ENCODE measurements at regions of chr20 and their contacts with region 1.

Region 1: GRCh38 chr20:5448449-5449118 is 131.8 kb upstream of the PROKR2 start:
- DNase-seq: peak; percentile 81
- H3K4me3 ChIP-seq: peak overlapping the region in 1 of 2 experiments; percentile 21; a peak in 1 of 4 replicates
- H3K27ac ChIP-seq: peak overlapping the region in 1 of 2 experiments; percentile 86; a peak in 2 of 4 replicates
- H3K4me1 ChIP-seq: peaks cover 0 to 15% of the 10 kb centered on the region in 2 experiments; a peak in 2 of 4 replicates
- H3K27me3 ChIP-seq: no peaks in the 10 kb centered on the region
- CTCF ChIP-seq: peak; percentile 76
- EP300 ChIP-seq: no peak
- RAD21 ChIP-seq: peak; percentile 90

Region 2: DNA sequence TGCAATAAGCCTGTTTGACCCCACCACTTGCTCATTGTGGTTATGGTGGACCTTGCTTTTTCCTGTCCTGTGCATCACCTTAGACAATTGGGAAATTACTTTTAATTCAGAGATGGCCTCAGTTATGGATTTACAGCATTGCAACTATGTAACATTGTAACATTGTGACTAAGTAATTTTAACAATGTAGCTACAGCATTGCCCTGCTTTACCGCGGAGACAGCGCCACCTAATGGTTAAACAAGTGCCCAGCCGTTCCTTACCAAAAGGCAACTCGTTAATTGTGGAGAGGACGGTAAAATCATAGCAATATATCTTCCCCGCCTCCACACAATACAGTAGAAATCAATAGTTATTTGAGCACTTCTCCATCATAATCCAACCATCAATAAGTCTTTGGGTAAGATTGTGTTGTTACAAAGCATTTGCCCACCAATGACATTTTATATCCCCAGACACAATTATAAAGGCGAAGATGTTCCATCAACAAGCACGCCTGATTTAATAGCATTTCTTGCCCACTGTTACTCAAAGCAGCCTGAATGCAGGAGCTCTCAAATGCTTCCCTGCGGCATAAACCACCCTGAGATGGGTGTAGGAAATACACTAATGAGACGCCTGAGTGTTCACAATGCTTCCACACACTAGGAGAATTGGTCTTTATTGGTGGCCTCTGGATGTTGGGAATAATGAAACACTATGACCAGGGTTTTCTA is 225.5 kb before region 1 on chr20:
- CTCF ChIA-PET with region 1: interaction called, 19 read pairs
- POLR2A ChIA-PET with region 1: no interaction called
- DNase-seq: no peak
- H3K4me3 ChIP-seq: no peak overlapping the region; a peak in 1 of 4 replicates
- H3K27ac ChIP-seq: no peak overlapping the region
- H3K4me1 ChIP-seq: no peaks in the 10 kb centered on the region
- H3K27me3 ChIP-seq: no peaks in the 10 kb centered on the region
- CTCF ChIP-seq: peak; percentile 94
- EP300 ChIP-seq: no peak
- RAD21 ChIP-seq: peak; percentile 57

Region 3: GRCh38 chr20:5393218-5393870 is 55.2 kb before region 1 on chr20:
- CTCF ChIA-PET with region 1: interaction called, 69 read pairs
- POLR2A ChIA-PET with region 1: interaction called, 3 read pairs
- DNase-seq: peak; percentile 45
- H3K4me3 ChIP-seq: no peak overlapping the region
- H3K27ac ChIP-seq: peak overlapping the region in 1 of 2 experiments; percentile 95; a peak in 2 of 4 replicates
- H3K4me1 ChIP-seq: peaks cover 0 to 28% of the 10 kb centered on the region in 2 experiments; a peak in 2 of 4 replicates
- H3K27me3 ChIP-seq: no peaks in the 10 kb centered on the region
- CTCF ChIP-seq: no peak
- EP300 ChIP-seq: peak in 1 of 2 experiments; percentile 95; a peak in 2 of 4 replicates
- RAD21 ChIP-seq: peak; percentile 82

Region 4: DNA sequence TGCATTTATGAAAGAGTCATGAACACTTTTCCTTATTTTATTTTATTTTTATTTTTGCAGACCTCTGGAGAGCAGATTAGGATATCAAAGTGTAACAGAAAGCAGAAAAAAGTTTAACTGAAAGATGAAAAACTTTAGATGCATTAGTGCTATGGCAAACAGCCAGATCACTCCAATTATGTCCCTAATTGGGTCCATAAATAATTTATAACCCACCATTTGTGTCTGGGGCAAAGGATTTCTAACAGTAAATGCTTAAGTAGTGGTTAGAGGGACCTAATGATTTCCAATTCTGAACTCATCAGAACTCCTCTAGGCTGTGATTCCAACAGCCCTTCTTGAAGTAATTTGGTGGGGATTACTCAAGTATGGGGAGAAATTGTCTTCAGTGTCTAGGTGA is 38.1 kb before region 1 on chr20:
- CTCF ChIA-PET with region 1: interaction called, 27 read pairs
- POLR2A ChIA-PET with region 1: no interaction called
- DNase-seq: peak; percentile 26
- H3K4me3 ChIP-seq: no peak overlapping the region
- H3K27ac ChIP-seq: peak overlapping the region in 1 of 2 experiments; percentile 98; a peak in 2 of 4 replicates
- H3K4me1 ChIP-seq: peaks cover 0 to 31% of the 10 kb centered on the region in 2 experiments; a peak in 2 of 4 replicates
- H3K27me3 ChIP-seq: no peaks in the 10 kb centered on the region
- CTCF ChIP-seq: no peak
- EP300 ChIP-seq: peak in 1 of 2 experiments; percentile 89; a peak in 2 of 4 replicates
- RAD21 ChIP-seq: no peak

Region 5: GRCh38 chr20:5430670-5431069 is 17.9 kb before region 1 on chr20:
- CTCF ChIA-PET with region 1: interaction called, 38 read pairs
- POLR2A ChIA-PET with region 1: no interaction called
- DNase-seq: no peak
- H3K4me3 ChIP-seq: no peak overlapping the region
- H3K27ac ChIP-seq: no peak overlapping the region
- H3K4me1 ChIP-seq: peaks cover 0 to 6% of the 10 kb centered on the region in 2 experiments; a peak in 1 of 4 replicates
- H3K27me3 ChIP-seq: no peaks in the 10 kb centered on the region
- CTCF ChIP-seq: no peak
- EP300 ChIP-seq: no peak
- RAD21 ChIP-seq: peak; percentile 22

Region 6: GRCh38 chr20:5495939-5496338 is 47.4 kb after region 1 on chr20:
- CTCF ChIA-PET with region 1: interaction called, 10 read pairs
- POLR2A ChIA-PET with region 1: no interaction called
- DNase-seq: no peak
- H3K4me3 ChIP-seq: no peak overlapping the region
- H3K27ac ChIP-seq: no peak overlapping the region
- H3K4me1 ChIP-seq: peaks cover 0 to 10% of the 10 kb centered on the region in 2 experiments; a peak in 1 of 4 replicates
- H3K27me3 ChIP-seq: no peaks in the 10 kb centered on the region
- CTCF ChIP-seq: no peak
- EP300 ChIP-seq: no peak
- RAD21 ChIP-seq: no peak

Region 7: GRCh38 chr20:5863040-5863833 is 414.7 kb after region 1 on chr20:
- CTCF ChIA-PET with region 1: no interaction called
- POLR2A ChIA-PET with region 1: no interaction called
- DNase-seq: no peak
- H3K4me3 ChIP-seq: no peak overlapping the region
- H3K27ac ChIP-seq: no peak overlapping the region
- H3K4me1 ChIP-seq: peaks cover 18 to 20% of the 10 kb centered on the region in 2 experiments; a peak in 3 of 4 replicates
- H3K27me3 ChIP-seq: no peaks in the 10 kb centered on the region
- CTCF ChIP-seq: no peak
- EP300 ChIP-seq: peak in 1 of 2 experiments; percentile 58; a peak in 1 of 4 replicates
- RAD21 ChIP-seq: no peak

Measured in SK-N-SH (cell line).